Posterior vena cava (tissue), 2 donors: ENCODE measurements at regions of chr12 and their contacts with region 1.

Region 1: GRCh38 chr12:54993161-54993835 is 8.7 kb upstream of the TESPA1 start:
- DNase-seq: no peak

Region 2: GRCh38 chr12:54958048-54958658 is 35.1 kb before region 1 on chr12:
- intact Hi-C with region 1: no loop called
- DNase-seq: no peak

Region 3: DNA sequence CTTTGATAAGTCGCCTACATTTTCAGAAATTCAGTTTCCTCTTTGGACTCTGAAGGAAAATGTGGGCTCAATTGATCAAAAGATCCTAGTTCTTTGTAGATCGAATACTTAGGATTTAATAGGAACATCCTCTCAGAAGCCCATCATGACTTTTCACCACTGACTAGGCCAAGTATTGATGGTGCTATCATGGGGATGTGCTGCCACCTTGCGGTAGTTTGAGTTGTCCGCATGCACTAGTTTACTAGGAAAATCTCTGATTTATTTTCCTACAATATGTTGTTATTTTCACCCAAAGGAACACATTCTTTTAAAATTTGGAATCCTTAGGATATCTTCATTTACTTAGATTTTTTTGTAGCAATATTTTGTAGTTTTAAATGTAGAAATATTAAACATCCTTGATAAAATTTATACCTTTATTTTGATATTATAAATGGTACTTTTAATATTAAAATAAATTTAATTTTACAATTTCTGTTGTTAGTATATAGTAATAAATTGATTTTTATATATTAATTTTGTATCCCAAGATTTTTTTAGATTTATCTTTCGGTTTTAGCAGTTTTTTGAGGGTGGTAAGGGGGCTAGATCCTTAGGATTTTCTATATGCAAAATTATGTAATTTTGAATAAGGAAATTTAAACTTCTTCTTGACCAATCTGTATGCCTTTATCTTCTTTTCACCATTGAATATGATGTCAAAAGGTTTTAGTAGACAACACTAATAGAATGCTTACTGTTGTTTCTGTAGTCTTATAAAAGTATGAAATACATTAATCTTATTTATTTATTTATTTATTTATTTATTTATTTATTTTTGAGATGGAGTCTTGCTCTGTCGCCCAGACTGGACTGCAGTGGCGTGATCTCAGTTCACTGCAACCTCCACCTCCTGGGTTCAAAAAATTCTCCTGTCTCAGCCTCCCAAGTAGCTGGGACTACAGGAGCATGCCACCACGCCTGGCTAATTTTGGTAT is 80.0 kb after region 1 on chr12:
- intact Hi-C with region 1: loop called (anchors 10 kb)
- DNase-seq: peak; percentile 86